ENCODE measurements at regions of chr11 and their contacts with region 1.

Region 1: GRCh38 chr11:3849297-3849874 is 6.1 kb upstream of the STIM1 start:
- DNase-seq: no peak
- ATAC-seq: peak; percentile 80
- H3K4me3 ChIP-seq: no peak overlapping the region
- H3K27ac ChIP-seq: no peak overlapping the region
- H3K4me1 ChIP-seq: peaks cover 12% of the 10 kb centered on the region
- H3K27me3 ChIP-seq: no peaks in the 10 kb centered on the region
- CTCF ChIP-seq: peak; percentile 58 to 74 (median 67)
- EP300 ChIP-seq: no peak
- POLR2A ChIP-seq: no peak
- RAD21 ChIP-seq: peak; percentile 75

Region 2: DNA sequence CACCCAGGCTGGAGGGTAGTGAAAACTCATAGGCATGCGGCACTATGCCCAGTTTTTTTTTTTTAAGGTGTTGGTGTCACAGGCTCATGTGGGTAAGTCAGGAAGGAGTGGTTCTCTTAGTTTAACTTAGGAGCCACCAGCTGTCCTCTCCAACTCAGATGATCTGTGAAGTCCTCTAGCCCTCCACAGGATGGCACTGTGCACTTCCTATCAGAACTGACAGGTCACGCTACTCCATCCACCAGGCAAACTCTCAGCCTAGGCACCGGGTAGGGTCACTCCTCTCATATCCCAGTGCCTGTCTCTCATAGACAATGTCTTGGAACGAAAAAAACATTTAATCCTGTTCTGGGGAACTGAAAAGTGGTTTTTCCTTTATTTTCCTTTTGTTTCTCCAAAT is 873.8 kb before region 1 on chr11:
- CTCF ChIA-PET with region 1: no interaction called
- POLR2A ChIA-PET with region 1: no interaction called
- RAD21 ChIA-PET with region 1: no interaction called
- SMC1A ChIA-PET with region 1: no interaction called
- in situ Hi-C with region 1: no loop called
- intact Hi-C with region 1: no loop called
- DNase-seq: no peak
- ATAC-seq: peak; percentile 94
- H3K4me3 ChIP-seq: no peak overlapping the region
- H3K27ac ChIP-seq: no peak overlapping the region
- H3K4me1 ChIP-seq: no peaks in the 10 kb centered on the region
- H3K27me3 ChIP-seq: no peaks in the 10 kb centered on the region
- CTCF ChIP-seq: peak; percentile 48 to 65 (median 60); a peak in 4 of 6 replicates
- EP300 ChIP-seq: no peak
- POLR2A ChIP-seq: no peak
- RAD21 ChIP-seq: peak; percentile 66

Region 3: DNA sequence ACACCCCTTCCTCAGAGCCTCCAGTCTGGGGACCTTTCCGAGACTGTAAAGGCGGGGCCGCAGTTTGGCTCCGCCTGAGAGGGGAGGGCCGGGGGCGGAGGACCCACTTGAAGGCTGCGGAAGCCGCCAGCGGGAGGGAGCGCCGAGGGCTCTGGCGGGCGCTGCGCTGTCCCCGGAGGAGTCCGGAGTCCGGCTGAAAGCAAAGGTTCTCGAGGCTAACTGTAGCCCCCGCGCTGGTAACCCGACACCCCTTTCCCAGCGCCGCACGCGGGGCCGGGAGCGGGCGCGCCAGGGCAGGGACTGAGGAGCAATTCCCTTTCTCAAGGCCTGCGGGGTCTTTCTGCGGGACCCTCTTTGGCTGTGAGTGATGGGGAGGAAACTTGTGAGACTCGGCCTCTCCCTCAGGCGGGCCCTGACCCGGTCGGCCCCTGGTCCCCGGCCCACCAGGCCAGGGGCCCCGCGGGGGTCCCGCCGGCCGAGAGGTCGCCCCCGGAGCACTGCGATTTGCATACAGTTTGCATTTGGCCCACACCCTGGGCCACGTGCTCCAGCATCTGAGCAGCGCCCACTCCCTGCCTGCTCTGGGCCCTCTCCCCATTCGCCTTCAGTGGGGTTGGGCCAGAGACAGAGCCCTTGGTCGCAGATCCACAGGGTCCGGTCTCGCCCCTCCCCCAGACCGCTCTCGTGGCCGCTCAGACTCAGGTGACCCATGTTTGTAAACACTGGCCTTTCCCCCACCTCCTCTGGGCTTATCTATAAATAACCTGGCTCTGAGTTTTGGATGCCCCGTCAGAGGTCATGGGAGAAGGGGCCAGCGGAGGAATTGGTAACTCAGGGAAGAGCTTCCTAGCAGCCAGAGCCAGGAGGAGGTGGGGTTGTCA is 207.1 kb before region 1 on chr11:
- CTCF ChIA-PET with region 1: no interaction called
- POLR2A ChIA-PET with region 1: no interaction called
- RAD21 ChIA-PET with region 1: no interaction called
- SMC1A ChIA-PET with region 1: no interaction called
- in situ Hi-C with region 1: no loop called
- intact Hi-C with region 1: no loop called
- DNase-seq: no peak
- ATAC-seq: peak; percentile 82
- H3K4me3 ChIP-seq: no peak overlapping the region; the same call in 1 of the 2 replicates
- H3K27ac ChIP-seq: no peak overlapping the region
- H3K4me1 ChIP-seq: peaks cover 2% of the 10 kb centered on the region; the same call in 1 of the 2 replicates
- H3K27me3 ChIP-seq: no peaks in the 10 kb centered on the region; a peak in 2 of 4 replicates
- CTCF ChIP-seq: no peak
- EP300 ChIP-seq: no peak
- POLR2A ChIP-seq: no peak
- RAD21 ChIP-seq: no peak

Region 4: DNA sequence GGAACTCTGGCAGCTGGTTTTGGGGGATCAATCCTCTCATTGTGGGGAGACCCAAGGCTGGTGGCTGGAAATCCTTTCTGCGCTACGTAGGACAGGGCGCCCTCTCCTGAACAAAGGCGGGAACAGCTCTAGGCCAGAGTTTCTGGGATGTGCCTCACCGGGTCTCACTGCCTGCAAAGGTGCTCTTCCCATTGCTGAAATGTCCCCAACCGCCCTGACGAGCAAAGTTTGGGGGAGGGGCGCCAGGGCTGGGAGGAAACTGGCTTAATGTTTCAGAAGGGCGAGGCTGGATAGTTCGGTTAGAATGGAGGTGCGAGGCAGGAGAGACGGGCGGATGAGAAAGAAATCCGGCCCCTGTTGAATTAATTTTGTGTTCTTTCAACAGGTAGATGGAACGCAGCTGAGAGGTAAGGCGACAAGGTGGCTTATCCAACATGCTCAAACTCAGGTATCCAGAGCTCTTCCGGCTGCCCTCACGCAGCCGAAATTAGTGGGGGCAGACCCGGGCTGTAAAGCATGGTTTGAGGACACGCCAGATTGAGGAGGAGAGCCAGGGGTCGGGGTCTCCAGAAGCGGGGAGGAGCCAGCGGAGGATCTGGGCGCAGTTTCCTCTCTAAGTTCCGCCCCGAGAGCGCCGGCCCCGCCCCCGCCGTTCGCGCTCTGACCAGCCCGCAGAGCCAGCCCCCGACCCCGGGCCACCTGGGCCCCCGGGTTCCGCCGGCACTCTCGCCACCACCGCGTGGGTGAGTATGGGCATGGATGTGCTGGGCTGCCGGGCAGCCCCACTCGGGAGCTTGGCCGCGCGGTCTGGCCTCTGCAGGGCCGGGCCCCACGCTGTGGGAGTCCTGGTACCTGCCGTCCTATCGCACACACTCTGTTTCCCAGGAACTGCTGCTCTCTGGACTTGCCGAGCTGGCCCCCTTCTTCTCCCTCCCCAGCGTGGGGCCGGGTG is 41.2 kb before region 1 on chr11 and contains the start of gene PGAP2:
- CTCF ChIA-PET with region 1: interaction called, 21 read pairs
- POLR2A ChIA-PET with region 1: interaction called, 4 read pairs
- RAD21 ChIA-PET with region 1: interaction called, 10 read pairs
- SMC1A ChIA-PET with region 1: interaction called, 6 read pairs
- in situ Hi-C with region 1: no loop called
- intact Hi-C with region 1: no loop called
- DNase-seq: no peak
- ATAC-seq: peak; percentile 89
- H3K4me3 ChIP-seq: peak within 1 kb of the TSS; percentile 92
- H3K27ac ChIP-seq: peak within 1 kb of the TSS; percentile 57
- H3K4me1 ChIP-seq: no peaks in the 10 kb centered on the region
- H3K27me3 ChIP-seq: no peaks in the 10 kb centered on the region
- CTCF ChIP-seq: peak; percentile 71 to 75 (median 73)
- EP300 ChIP-seq: no peak
- POLR2A ChIP-seq: peak; percentile 46; the same call in 1 of the 2 replicates
- RAD21 ChIP-seq: peak; percentile 62
- polyA plus RNA-seq, gene PGAP2: 25.4 to 37.4 TPM

Region 5: GRCh38 chr11:3880724-3881123 is 31.3 kb after region 1 on chr11:
- CTCF ChIA-PET with region 1: interaction called, 1,047 read pairs
- POLR2A ChIA-PET with region 1: interaction called, 405 read pairs
- RAD21 ChIA-PET with region 1: interaction called, 253 read pairs
- SMC1A ChIA-PET with region 1: interaction called, 633 read pairs
- in situ Hi-C with region 1: no loop called
- intact Hi-C with region 1: loop called (anchors 2 kb)
- DNase-seq: no peak
- ATAC-seq: peak; percentile 70
- H3K4me3 ChIP-seq: peak overlapping the region; percentile 46
- H3K27ac ChIP-seq: peak overlapping the region; percentile 83
- H3K4me1 ChIP-seq: peaks cover 65% of the 10 kb centered on the region
- H3K27me3 ChIP-seq: no peaks in the 10 kb centered on the region
- CTCF ChIP-seq: no peak
- EP300 ChIP-seq: no peak
- POLR2A ChIP-seq: 0 out of 2 replicates have a peak, but pooled peaks have one; percentile 19
- RAD21 ChIP-seq: no peak

Region 6: GRCh38 chr11:3905080-3905953 is 55.9 kb after region 1 on chr11:
- CTCF ChIA-PET with region 1: interaction called, 36 read pairs
- POLR2A ChIA-PET with region 1: interaction called, 10 read pairs
- RAD21 ChIA-PET with region 1: interaction called, 87 read pairs
- SMC1A ChIA-PET with region 1: interaction called, 21 read pairs
- in situ Hi-C with region 1: no loop called
- intact Hi-C with region 1: no loop called
- DNase-seq: no peak
- ATAC-seq: peak; percentile 89
- H3K4me3 ChIP-seq: no peak overlapping the region
- H3K27ac ChIP-seq: no peak overlapping the region
- H3K4me1 ChIP-seq: peaks cover 51% of the 10 kb centered on the region
- H3K27me3 ChIP-seq: no peaks in the 10 kb centered on the region
- CTCF ChIP-seq: no peak
- EP300 ChIP-seq: no peak
- POLR2A ChIP-seq: no peak
- RAD21 ChIP-seq: no peak

Region 7: GRCh38 chr11:3959015-3959919 is 109.9 kb after region 1 on chr11:
- CTCF ChIA-PET with region 1: interaction called, 51 read pairs
- POLR2A ChIA-PET with region 1: no interaction called
- RAD21 ChIA-PET with region 1: interaction called, 41 read pairs
- SMC1A ChIA-PET with region 1: interaction called, 32 read pairs
- in situ Hi-C with region 1: no loop called
- intact Hi-C with region 1: no loop called
- DNase-seq: no peak
- ATAC-seq: peak; percentile 89
- H3K4me3 ChIP-seq: no peak overlapping the region
- H3K27ac ChIP-seq: no peak overlapping the region
- H3K4me1 ChIP-seq: peaks cover 4% of the 10 kb centered on the region; the same call in 1 of the 2 replicates
- H3K27me3 ChIP-seq: no peaks in the 10 kb centered on the region
- CTCF ChIP-seq: peak; percentile 25 to 32 (median 30); a peak in 3 of 6 replicates
- EP300 ChIP-seq: no peak
- POLR2A ChIP-seq: no peak
- RAD21 ChIP-seq: peak; percentile 41; the same call in 1 of the 2 replicates

Region 8: DNA sequence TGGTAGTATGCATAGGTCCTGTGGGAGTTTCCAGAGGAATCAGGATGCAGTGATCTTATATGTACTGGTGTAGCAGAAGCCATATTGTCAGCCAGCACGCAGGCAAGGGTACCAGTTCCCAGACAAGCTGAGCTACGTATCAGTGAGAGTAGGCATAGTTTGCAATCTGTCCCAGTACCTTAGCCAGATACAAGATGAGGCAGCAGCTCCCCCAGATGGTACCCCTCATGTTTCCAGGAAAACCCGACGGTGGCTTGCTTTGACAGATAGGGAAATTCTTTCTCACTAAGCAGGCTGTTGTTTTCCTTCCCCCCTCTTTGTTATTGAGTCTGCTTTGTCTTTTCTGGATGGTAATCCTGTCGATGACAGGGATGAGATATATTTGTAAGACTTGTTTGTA is 135.5 kb after region 1 on chr11:
- CTCF ChIA-PET with region 1: interaction called, 17 read pairs
- POLR2A ChIA-PET with region 1: no interaction called
- RAD21 ChIA-PET with region 1: interaction called, 21 read pairs
- SMC1A ChIA-PET with region 1: interaction called, 11 read pairs
- in situ Hi-C with region 1: no loop called
- intact Hi-C with region 1: no loop called
- DNase-seq: no peak
- ATAC-seq: no peak
- H3K4me3 ChIP-seq: no peak overlapping the region
- H3K27ac ChIP-seq: no peak overlapping the region
- H3K4me1 ChIP-seq: no peaks in the 10 kb centered on the region
- H3K27me3 ChIP-seq: no peaks in the 10 kb centered on the region
- CTCF ChIP-seq: peak in 1 of 3 experiments; percentile 31; a peak in 1 of 6 replicates
- EP300 ChIP-seq: no peak
- POLR2A ChIP-seq: no peak
- RAD21 ChIP-seq: peak; percentile 65

Region 9: GRCh38 chr11:4065601-4066377 is 216.4 kb after region 1 on chr11:
- CTCF ChIA-PET with region 1: interaction called, 979 read pairs
- POLR2A ChIA-PET with region 1: interaction called, 39 read pairs
- RAD21 ChIA-PET with region 1: interaction called, 605 read pairs
- SMC1A ChIA-PET with region 1: interaction called, 805 read pairs
- in situ Hi-C with region 1: loop called (anchors 5 kb)
- intact Hi-C with region 1: no loop called
- DNase-seq: no peak
- ATAC-seq: no peak
- H3K4me3 ChIP-seq: no peak overlapping the region
- H3K27ac ChIP-seq: no peak overlapping the region
- H3K4me1 ChIP-seq: peaks cover 6% of the 10 kb centered on the region; the same call in 1 of the 2 replicates
- H3K27me3 ChIP-seq: no peaks in the 10 kb centered on the region
- CTCF ChIP-seq: no peak
- EP300 ChIP-seq: no peak
- POLR2A ChIP-seq: no peak
- RAD21 ChIP-seq: no peak